ENCODE measurements at regions of chr12 and their contacts with region 1.

Region 1: GRCh38 chr12:56117778-56118687 is at the start of gene ZC3H10:
- DNase-seq: peak; percentile 99
- H3K4me3 Mint-ChIP-seq: peak within 1 kb of the TSS; percentile 99
- H3K27ac Mint-ChIP-seq: peak within 1 kb of the TSS; percentile 100
- H3K4me1 Mint-ChIP-seq: peaks cover 29% of the 10 kb centered on the region
- H3K27me3 Mint-ChIP-seq: no peaks in the 10 kb centered on the region
- total RNA-seq, gene ZC3H10: 5.1 to 7.2 TPM

Region 2: DNA sequence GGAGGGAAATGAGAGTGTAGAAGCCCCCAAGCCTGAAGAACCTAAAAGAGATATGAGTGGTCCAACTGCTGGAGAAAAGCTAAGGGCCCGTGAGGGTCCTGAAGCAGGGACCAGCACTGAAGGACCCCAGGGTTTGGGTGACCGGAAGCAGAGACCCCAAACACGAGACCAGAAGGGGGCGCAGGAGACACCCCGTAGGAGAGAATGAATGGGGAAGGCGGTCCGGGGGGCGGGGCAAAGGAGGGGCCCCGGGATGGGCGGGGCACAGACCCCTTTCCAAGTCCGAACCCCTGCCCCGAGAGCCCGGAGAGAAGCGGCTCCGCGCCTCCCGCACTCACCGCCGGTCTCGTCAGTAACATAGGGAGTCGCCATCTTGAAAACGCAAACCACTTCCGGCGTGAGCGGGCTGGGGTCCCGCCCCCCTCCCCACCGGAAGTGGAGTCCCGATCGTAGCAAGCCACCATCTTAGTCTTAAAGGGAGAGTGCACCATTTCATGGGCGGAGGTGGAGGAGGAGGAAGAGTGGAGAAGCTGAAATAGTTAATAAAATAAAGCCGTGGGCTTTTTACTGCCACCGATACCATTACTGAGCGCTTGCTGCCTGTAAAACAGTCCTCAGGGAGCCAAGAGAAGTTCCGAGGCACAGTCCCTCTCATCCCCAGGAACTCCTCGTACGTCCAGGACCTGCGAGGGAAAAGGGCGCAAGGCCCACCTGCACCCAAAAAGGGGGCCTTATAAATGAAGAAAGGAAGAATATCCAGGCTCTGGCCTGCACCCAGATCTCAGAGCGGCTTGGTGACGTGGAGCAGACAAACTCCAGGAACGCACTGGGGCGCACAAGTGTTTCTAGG is 191.1 kb before region 1 on chr12:
- CTCF ChIA-PET with region 1: no interaction called
- POLR2A ChIA-PET with region 1: interaction called, 5 read pairs
- intact Hi-C with region 1: loop called (anchors 1 kb)
- DNase-seq: peak; percentile 96
- H3K4me3 Mint-ChIP-seq: peak overlapping the region; percentile 96
- H3K27ac Mint-ChIP-seq: peak overlapping the region; percentile 98
- H3K4me1 Mint-ChIP-seq: peaks cover 43% of the 10 kb centered on the region
- H3K27me3 Mint-ChIP-seq: no peaks in the 10 kb centered on the region

Region 3: GRCh38 chr12:56062996-56063395 is 55.0 kb before region 1 on chr12:
- CTCF ChIA-PET with region 1: no interaction called
- POLR2A ChIA-PET with region 1: no interaction called
- intact Hi-C with region 1: no loop called
- DNase-seq: no peak
- H3K4me3 Mint-ChIP-seq: no peak overlapping the region
- H3K27ac Mint-ChIP-seq: no peak overlapping the region
- H3K4me1 Mint-ChIP-seq: peaks cover 4% of the 10 kb centered on the region
- H3K27me3 Mint-ChIP-seq: no peaks in the 10 kb centered on the region

Region 4: DNA sequence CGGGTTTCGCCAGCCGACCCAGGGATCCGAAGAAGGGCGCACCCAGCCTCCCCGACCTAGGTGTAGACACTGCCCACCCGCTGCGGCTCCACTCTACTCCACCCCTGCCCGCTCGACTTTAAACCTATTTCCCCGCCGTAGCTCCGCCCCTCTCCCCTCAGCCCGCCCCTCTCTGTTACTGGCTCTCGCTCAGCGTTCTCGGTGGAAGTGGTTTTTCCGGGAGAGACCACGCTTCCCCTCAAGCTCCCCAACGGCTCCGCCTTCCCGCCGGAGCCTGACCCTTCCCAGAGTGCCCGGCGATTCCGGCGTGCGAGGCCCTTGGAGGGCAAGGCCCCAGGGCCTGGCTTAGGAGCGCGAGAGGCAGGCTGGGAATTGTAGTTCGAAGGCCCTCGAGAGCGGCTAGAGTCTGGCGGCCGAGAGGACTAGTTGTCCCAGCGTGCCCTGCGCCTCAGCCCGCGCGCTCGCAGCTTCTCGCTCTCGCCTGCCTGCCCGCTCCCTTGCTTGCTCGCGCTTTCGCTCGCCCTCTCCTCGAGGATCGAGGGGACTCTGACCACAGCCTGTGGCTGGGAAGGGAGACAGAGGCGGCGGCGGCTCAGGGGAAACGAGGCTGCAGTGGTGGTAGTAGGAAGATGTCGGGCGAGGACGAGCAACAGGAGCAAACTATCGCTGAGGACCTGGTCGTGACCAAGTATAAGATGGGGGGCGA is 13.8 kb before region 1 on chr12 and contains the start of gene PA2G4:
- CTCF ChIA-PET with region 1: interaction called, 60 read pairs
- POLR2A ChIA-PET with region 1: interaction called, 101 read pairs
- intact Hi-C with region 1: loop called (anchors 1 kb)
- DNase-seq: peak; percentile 99
- H3K4me3 Mint-ChIP-seq: peak within 1 kb of the TSS; percentile 100
- H3K27ac Mint-ChIP-seq: peak within 1 kb of the TSS; percentile 97
- H3K4me1 Mint-ChIP-seq: peaks cover 34% of the 10 kb centered on the region
- H3K27me3 Mint-ChIP-seq: no peaks in the 10 kb centered on the region
- total RNA-seq, gene PA2G4: 399 to 410 TPM

Region 5: DNA sequence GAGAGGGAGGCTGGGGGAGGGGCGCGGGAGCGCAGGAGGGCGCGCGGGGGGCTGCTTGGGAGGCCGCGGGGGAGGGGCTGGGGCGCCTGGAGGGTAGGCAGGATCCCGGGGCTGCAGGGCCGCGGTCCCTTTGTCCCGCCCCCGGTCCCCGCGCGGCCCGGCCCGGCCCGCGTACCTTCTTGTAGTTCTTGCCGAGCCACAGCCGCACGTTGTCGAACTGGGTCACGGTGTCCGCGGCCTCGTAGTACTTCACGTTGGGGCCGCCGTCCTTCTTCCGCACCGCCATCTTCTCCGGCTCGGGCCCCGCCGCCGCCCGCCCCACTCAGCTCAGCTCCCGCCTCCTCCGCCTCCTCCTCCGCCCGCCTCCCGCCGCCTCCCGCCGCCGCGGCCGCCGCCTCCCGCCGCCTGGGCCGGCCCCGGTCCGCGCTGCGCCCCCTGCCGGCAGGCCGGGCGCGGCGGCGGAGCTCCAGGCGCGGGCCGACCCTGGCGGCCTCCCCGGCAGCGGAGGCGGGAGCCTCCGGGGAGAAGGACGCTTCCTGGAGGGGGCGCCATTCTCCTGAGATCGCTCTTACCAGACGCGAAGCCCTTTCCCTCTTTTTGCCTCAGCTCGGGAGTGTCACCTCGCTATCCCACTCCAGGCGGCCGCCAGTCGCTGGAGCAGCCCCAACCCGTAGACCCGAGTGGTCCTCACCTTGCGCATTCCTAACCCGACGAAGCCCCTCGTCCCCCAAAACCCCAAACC is 71.3 kb after region 1 on chr12 and contains the start of gene SMARCC2:
- CTCF ChIA-PET with region 1: interaction called, 168 read pairs
- POLR2A ChIA-PET with region 1: interaction called, 54 read pairs
- intact Hi-C with region 1: loop called (anchors 1 kb)
- DNase-seq: peak; percentile 92
- H3K4me3 Mint-ChIP-seq: peak within 1 kb of the TSS; percentile 87
- H3K27ac Mint-ChIP-seq: peak within 1 kb of the TSS; percentile 95
- H3K4me1 Mint-ChIP-seq: peaks cover 35% of the 10 kb centered on the region
- H3K27me3 Mint-ChIP-seq: no peaks in the 10 kb centered on the region
- total RNA-seq, gene SMARCC2: 96.4 to 103 TPM

Region 6: DNA sequence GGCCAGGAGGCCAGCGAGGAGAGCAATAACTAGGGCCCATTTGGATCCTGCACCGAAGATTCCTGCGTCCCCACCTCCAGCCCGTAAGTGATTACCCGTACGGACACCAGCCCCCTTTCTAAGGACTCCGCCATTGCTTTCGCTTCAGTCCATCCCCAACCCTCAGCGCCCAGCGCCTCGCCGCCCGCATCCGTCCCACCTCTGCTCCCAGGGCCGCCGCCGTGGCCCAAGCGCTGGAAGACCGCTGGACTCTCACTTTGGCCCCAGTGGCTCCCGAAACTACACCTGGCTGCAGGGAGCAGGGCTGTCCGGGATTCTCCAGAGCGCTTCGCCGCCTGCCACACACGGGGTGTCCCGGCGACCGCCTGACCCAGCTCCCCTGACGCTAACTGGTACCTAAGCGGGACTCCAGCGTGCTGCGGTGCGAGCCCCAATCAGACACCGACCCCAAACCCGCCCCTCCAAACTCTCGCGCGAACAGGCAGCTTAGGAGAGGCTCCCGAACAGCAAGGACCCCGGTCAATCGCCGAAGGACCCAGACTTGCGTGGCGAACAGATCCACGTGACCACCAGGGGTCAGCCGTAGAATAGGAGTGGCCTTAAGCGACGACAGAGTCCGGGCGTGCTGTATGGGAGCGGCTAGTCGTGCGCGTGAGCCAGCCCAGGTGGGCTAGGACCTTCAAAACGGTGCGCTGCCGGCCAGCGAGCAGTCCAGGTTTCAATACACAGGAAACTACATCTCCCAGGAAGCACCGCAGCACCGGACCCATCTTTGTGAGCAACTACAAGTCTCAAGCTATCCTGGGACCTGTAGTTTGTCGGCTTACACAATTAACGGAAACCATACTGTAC is 197.8 kb after region 1 on chr12 and contains the start of gene CNPY2:
- CTCF ChIA-PET with region 1: interaction called, 8 read pairs
- POLR2A ChIA-PET with region 1: no interaction called
- intact Hi-C with region 1: loop called (anchors 5 kb)
- DNase-seq: peak; percentile 95
- H3K4me3 Mint-ChIP-seq: peak within 1 kb of the TSS; percentile 98
- H3K27ac Mint-ChIP-seq: peak within 1 kb of the TSS; percentile 97
- H3K4me1 Mint-ChIP-seq: peaks cover 16% of the 10 kb centered on the region
- H3K27me3 Mint-ChIP-seq: no peaks in the 10 kb centered on the region
- total RNA-seq, gene CNPY2: 74.7 to 91.6 TPM

Region 7: GRCh38 chr12:56630160-56630632 is 512.2 kb after region 1 on chr12 and contains the start of gene BAZ2A:
- CTCF ChIA-PET with region 1: interaction called, 3 read pairs
- POLR2A ChIA-PET with region 1: no interaction called
- intact Hi-C with region 1: loop called (anchors 5 kb)
- DNase-seq: peak; percentile 92
- H3K4me3 Mint-ChIP-seq: peak within 1 kb of the TSS; percentile 93
- H3K27ac Mint-ChIP-seq: peak within 1 kb of the TSS; percentile 93
- H3K4me1 Mint-ChIP-seq: peaks cover 71% of the 10 kb centered on the region
- H3K27me3 Mint-ChIP-seq: no peaks in the 10 kb centered on the region
- total RNA-seq, gene BAZ2A: 90.7 to 111 TPM

Measured in activated CD4-positive, alpha-beta memory T cell treated with anti-CD3 and anti-CD28 coated beads for 36 hours (primary cell).